ENCODE measurements at regions of chr3 and their contacts with region 1.

Region 1: DNA sequence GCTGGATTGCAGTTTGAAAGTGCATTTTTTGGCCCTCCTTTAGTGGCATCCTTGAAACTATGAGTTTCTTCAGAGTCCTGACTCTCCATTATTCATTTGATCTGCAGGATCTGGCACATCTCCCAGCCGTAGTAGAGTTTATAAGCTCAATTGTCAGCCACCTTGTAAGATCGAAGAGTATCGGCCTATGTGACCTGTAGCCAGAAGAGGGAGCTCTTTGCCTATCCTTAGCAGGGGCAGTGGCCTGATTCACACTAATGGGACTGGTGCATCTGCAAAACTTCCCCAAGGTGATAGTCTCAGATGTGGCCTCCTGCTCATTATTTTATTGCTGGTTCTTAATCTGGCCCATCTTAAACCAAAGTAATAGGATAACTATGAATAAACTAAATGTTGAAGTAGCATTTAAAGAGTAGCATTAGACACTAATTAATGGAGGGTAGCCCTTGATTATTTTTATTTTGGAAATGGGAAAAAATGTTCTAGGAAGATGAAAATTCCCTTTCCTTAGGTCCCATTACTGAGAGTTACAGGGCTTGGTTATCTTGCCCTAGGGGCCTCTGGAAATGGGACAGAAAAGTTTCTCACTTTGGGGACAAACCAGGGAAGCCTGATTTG is 21.2 kb downstream of the GCSAM start:
- DNase-seq: peak; percentile 59
- H3K4me3 ChIP-seq: no peak overlapping the region
- H3K27ac ChIP-seq: no peak overlapping the region
- H3K4me1 ChIP-seq: peaks cover 7% of the 10 kb centered on the region
- H3K27me3 ChIP-seq: no peaks in the 10 kb centered on the region
- CTCF ChIP-seq: peak; percentile 70 to 79
- POLR2A ChIP-seq: no peak

Region 2: DNA sequence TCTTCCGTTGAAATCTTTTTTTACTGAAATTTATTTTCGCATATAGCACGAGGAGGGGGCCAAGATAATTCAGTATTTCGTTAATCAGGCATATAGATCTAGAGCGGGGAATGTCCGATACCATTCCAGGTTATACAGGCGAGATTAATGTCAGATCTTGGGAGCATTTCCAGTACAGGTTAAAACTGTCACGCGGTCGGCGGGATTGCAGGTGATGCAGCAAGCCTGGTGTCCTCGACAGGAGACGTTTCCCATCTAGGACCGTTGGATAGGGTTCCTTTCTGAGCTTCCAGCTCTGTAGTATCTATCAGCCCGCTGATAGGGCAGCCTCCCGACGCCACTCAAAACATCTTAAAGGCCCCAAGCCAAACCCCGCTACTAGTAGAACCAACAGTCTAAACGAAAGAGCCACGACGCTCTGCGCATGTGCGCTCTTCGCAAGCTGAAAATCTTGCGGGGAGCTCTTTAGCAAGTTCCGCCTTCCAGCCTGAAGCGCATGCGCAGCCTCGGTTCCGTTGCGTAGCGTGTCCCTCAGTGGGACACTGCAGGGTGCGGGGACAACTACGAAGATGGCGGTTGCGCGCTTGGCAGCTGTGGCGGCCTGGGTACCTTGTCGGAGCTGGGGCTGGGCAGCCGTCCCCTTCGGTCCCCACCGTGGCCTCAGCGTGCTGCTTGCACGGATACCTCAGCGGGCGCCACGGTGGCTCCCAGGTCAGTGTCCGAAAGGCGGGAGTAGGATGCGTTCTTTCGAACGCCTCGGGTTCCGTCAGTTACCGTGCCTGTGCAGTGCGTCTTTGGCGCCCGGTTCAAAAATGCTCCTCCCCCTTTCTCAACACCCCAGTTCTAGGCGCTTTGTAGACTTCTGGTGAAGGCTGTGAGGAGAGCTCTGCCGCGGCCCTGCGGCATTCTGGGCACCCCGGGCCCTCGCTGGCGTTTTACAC is 133.1 kb before region 1 on chr3 and contains the start of gene ABHD10:
- CTCF ChIA-PET with region 1: interaction called, 12 read pairs
- POLR2A ChIA-PET with region 1: no interaction called
- dilution Hi-C with region 1: no loop called
- intact Hi-C with region 1: no loop called
- DNase-seq: peak; percentile 99
- H3K4me3 ChIP-seq: peak within 1 kb of the TSS; percentile 80 to 96 (median 96)
- H3K27ac ChIP-seq: peak within 1 kb of the TSS; percentile 33
- H3K4me1 ChIP-seq: peaks cover 21% of the 10 kb centered on the region
- H3K27me3 ChIP-seq: no peaks in the 10 kb centered on the region
- CTCF ChIP-seq: no peak
- POLR2A ChIP-seq: peak; percentile 90
- total RNA-seq, gene ABHD10: 26.2 and 37.0 TPM in 2 replicates

Region 3: GRCh38 chr3:112097378-112097777 is 14.5 kb before region 1 on chr3:
- CTCF ChIA-PET with region 1: interaction called, 34 read pairs
- POLR2A ChIA-PET with region 1: no interaction called
- dilution Hi-C with region 1: no loop called
- intact Hi-C with region 1: no loop called
- DNase-seq: peak; percentile 99
- H3K4me3 ChIP-seq: no peak overlapping the region
- H3K27ac ChIP-seq: peak overlapping the region; percentile 49
- H3K4me1 ChIP-seq: peaks cover 25% of the 10 kb centered on the region
- H3K27me3 ChIP-seq: no peaks in the 10 kb centered on the region
- CTCF ChIP-seq: no peak
- POLR2A ChIP-seq: no peak

Region 4: DNA sequence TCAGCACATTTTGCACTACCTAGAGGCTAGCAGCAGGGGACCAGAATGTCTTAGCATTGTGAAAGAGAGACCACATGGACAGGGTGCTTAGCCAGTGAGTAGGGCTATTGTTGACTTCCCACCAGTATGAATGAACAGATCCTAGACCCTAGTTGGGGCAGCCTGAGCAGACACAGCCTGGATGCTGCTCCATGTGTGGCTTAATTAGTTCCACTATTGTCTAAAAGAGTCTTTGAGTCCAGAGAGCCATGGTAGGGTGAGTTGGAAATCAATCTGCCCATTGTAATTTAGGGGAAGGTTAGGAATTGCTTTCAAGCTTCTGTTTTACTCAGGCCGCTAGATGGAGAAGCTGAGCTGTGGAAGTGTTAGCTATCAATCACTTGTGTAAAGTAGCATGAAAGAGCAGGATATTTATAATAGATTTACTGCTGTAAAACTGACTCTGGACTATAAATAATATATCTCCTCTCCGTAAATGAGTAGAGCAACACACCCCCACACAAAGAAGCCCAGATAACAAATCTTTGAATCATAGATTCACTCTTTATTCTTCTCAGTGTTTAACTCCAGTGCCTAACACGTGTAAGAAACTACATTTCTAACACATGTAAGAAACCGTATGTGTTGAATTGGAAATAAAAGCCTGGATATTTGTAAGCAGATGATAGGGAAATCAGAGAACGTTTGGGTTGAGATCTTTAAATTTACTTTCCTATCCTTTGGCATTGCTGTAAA is 25.2 kb after region 1 on chr3:
- CTCF ChIA-PET with region 1: interaction called, 17 read pairs
- POLR2A ChIA-PET with region 1: no interaction called
- dilution Hi-C with region 1: no loop called
- intact Hi-C with region 1: no loop called
- DNase-seq: peak; percentile 57
- H3K4me3 ChIP-seq: no peak overlapping the region
- H3K27ac ChIP-seq: no peak overlapping the region
- H3K4me1 ChIP-seq: no peaks in the 10 kb centered on the region
- H3K27me3 ChIP-seq: peaks cover 3 to 5% of the 10 kb centered on the region in 2 experiments
- CTCF ChIP-seq: peak; percentile 45 to 54
- POLR2A ChIP-seq: no peak

Region 5: DNA sequence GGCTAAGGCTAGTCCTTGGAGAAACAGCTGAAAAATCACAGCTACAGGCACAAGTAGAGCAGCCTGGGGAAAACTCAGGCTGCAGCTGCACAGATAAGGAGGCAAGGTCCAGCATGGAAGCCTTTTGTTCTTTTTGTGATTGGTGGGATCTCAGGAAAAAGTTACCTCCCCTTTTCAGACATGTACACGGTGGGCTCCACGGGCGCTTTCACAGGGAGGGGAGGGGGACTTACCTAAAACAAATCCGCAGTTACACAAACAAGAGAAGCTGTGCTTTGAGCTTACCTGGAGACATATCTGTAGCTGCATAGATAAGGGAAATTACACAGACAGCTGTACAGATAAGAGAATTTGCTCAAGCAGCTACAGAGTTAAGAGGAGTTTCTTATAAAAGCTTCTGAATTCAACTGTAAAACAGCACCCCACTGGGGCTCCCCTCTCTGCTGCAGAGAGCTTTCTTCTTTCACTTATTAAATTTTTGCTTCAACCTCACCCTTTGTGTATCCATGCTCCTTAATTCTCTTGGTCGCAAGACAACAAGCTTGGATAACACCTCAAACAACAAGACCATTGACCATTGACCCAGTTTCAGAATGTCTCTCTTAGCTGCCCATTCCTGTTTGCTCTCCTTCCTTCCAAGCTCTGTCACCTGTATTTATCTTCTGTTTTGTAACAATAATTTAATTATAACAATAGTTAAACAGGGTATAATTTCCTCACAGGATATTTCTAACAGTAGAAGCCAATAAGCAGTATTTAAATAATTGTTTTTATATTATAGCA is 210.2 kb after region 1 on chr3:
- CTCF ChIA-PET with region 1: interaction called, 13 read pairs
- POLR2A ChIA-PET with region 1: no interaction called
- dilution Hi-C with region 1: no loop called
- intact Hi-C with region 1: loop called (anchors 10 kb)
- DNase-seq: no peak
- H3K4me3 ChIP-seq: no peak overlapping the region
- H3K27ac ChIP-seq: no peak overlapping the region
- H3K4me1 ChIP-seq: no peaks in the 10 kb centered on the region
- H3K27me3 ChIP-seq: peaks cover 2 to 6% of the 10 kb centered on the region in 2 experiments
- CTCF ChIP-seq: no peak
- POLR2A ChIP-seq: no peak

Region 6: DNA sequence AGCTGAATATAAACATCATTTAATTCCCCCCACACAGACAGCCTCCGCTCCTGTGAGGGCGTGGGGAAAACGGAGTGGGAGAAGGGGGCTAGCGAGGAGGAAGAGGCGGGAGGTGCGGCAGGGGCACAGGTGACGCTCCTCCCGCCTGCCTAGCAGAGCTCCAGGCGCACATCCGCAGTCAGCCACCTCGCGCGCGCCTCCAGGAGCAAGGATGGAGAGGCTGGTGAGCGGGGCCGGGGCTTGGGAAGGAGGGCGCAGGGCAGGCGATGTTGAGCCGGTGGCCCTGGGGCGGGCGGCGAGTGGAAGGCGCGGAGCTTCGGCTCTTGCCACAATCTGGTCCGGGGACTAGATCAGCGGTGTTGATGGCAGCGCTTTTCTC is 221.1 kb after region 1 on chr3 and contains the start of gene CD200:
- CTCF ChIA-PET with region 1: interaction called, 11 read pairs
- POLR2A ChIA-PET with region 1: interaction called, 3 read pairs
- dilution Hi-C with region 1: no loop called
- intact Hi-C with region 1: loop called (anchors 10 kb)
- DNase-seq: peak; percentile 62
- H3K4me3 ChIP-seq: peak within 1 kb of the TSS; percentile 28 to 59 (median 56)
- H3K27ac ChIP-seq: no peak within 1 kb of the TSS
- H3K4me1 ChIP-seq: peaks cover 8% of the 10 kb centered on the region
- H3K27me3 ChIP-seq: peaks cover 0 to 6% of the 10 kb centered on the region in 2 experiments
- CTCF ChIP-seq: no peak
- POLR2A ChIP-seq: no peak
- total RNA-seq, gene CD200: 7.2 and 8.2 TPM in 2 replicates

Region 7: DNA sequence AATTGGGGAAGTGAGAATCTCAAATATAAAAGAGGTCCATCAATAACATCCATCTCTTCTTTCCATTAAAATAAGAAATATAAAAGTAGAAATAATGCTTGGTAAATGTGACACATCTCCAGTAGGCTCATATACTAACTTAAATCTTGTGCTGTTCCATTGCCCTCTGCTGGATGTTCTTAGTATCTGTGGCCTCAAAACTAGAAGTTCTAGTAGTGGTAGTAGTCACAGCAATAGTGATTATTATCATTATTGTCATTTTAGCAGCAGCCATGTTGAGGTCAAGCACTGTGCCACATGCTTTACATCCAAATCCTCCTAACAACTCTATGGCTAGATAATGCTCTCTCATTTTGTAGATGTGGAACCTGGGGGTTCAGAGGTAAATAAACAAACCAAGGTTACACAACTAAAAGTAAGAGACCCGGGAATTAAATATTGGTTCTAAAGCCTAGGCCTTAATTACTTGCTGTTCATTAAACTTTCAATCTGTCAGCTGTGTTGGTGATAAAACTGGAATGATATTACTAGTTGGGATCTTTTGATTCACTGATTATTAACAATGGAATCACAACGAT is 407.6 kb after region 1 on chr3:
- CTCF ChIA-PET with region 1: interaction called, 14 read pairs
- POLR2A ChIA-PET with region 1: no interaction called
- dilution Hi-C with region 1: no loop called
- intact Hi-C with region 1: loop called (anchors 1 kb)
- DNase-seq: peak; percentile 79
- H3K4me3 ChIP-seq: no peak overlapping the region
- H3K27ac ChIP-seq: no peak overlapping the region
- H3K4me1 ChIP-seq: no peaks in the 10 kb centered on the region
- H3K27me3 ChIP-seq: no peaks in the 10 kb centered on the region
- CTCF ChIP-seq: peak; percentile 45 to 52
- POLR2A ChIP-seq: no peak